ENCODE measurements at regions of chr16 and their contacts with region 1.

Region 1: DNA sequence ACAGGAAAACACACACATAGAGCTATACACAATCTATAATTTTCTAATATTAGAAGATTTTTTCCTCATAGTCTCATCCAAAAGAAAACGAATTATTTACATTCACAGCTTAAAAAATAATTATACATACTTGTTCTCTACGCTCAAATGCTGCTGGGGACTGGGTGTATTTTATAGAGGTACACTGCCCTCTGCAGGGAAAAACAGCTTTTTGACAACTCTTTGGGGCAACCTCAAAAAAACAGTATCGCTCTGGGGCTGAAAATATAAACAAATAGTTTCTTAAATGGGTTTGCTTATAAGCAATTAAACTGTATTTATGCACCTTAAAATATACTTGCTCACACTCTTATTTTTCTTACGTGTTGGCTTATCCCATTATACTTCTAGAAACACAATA is 261.8 kb upstream of the PSMD7 start:
- DNase-seq: peak; percentile 57
- H3K4me3 ChIP-seq: no peak overlapping the region
- H3K27ac ChIP-seq: no peak overlapping the region
- H3K4me1 ChIP-seq: no peaks in the 10 kb centered on the region
- H3K27me3 ChIP-seq: no peaks in the 10 kb centered on the region
- CTCF ChIP-seq: peak; percentile 50
- EP300 ChIP-seq: no peak
- RAD21 ChIP-seq: peak; percentile 79

Region 2: DNA sequence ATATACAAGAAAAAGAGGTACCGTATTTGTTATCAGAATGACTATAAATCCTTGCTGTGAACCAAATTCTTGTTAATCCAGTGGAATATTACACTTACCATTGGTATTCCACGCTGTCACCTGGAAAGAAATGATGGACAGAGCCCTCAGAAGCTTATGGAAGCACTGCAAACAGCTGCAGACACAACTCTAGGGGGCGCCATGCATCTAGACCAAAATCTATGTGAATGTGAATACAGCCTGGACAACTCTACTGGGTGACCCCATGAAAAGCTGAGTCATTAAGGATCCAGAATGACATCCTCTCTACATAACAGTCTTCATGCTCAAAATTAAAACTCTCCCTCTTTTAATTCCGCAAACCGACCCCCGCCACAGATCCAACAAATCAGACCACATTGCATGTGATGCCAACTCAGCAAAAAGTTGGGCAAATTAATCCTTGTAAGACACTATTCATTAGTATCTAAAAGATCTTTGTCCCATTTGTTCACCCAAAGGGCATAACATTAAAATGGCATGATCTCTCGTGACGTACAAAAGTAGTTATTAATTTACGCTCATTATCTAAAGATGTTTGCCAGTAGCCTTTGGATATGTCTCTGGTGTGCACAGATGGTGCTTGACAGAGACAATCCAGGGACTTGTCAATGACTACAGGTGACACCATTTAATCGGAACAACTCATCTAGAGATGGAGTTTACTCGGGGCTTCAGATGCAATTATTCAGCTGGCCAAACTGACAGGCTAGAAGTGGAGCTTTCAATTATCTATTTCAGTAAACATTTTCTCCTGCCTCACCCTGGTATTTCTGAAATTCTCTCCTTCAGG is 291.0 kb before region 1 on chr16:
- CTCF ChIA-PET with region 1: interaction called, 11 read pairs
- POLR2A ChIA-PET with region 1: no interaction called
- DNase-seq: peak; percentile 44
- H3K4me3 ChIP-seq: no peak overlapping the region
- H3K27ac ChIP-seq: no peak overlapping the region
- H3K4me1 ChIP-seq: peaks cover 0 to 9% of the 10 kb centered on the region in 2 experiments; a peak in 2 of 4 replicates
- H3K27me3 ChIP-seq: no peaks in the 10 kb centered on the region
- CTCF ChIP-seq: peak; percentile 17; the same call in 1 of the 2 replicates
- EP300 ChIP-seq: peak in 1 of 2 experiments; percentile 94; a peak in 2 of 4 replicates
- RAD21 ChIP-seq: peak; percentile 75

Region 3: GRCh38 chr16:73956587-73957494 is 78.0 kb before region 1 on chr16:
- CTCF ChIA-PET with region 1: interaction called, 28 read pairs
- POLR2A ChIA-PET with region 1: no interaction called
- DNase-seq: peak; percentile 65
- H3K4me3 ChIP-seq: no peak overlapping the region
- H3K27ac ChIP-seq: no peak overlapping the region
- H3K4me1 ChIP-seq: no peaks in the 10 kb centered on the region; a peak in 2 of 4 replicates
- H3K27me3 ChIP-seq: no peaks in the 10 kb centered on the region
- CTCF ChIP-seq: peak; percentile 95
- EP300 ChIP-seq: no peak
- RAD21 ChIP-seq: peak; percentile 91

Region 4: DNA sequence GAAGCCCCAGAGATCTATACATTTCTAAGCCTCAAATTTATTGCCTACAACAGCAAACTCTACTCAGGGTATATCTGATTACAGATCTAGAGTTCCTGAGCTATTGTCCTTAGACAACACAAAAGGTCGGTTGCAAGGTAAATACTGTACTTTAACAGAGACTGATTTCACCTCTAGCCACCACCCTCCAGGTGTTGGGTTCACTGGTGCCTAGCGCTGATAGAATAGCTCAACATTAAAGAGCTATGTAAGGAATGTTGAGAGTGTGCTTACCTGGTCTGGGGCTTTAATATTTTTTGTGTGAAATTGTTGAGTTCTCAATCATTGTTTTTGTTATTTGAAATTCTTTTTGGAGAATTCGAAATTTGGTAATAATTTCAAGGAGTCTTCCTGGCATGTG is 15.2 kb before region 1 on chr16:
- CTCF ChIA-PET with region 1: interaction called, 38 read pairs
- POLR2A ChIA-PET with region 1: no interaction called
- DNase-seq: no peak
- H3K4me3 ChIP-seq: no peak overlapping the region
- H3K27ac ChIP-seq: no peak overlapping the region
- H3K4me1 ChIP-seq: no peaks in the 10 kb centered on the region
- H3K27me3 ChIP-seq: no peaks in the 10 kb centered on the region
- CTCF ChIP-seq: no peak
- EP300 ChIP-seq: no peak
- RAD21 ChIP-seq: no peak

Region 5: GRCh38 chr16:74053826-74054225 is 19.0 kb after region 1 on chr16:
- CTCF ChIA-PET with region 1: interaction called, 40 read pairs
- POLR2A ChIA-PET with region 1: no interaction called
- DNase-seq: no peak
- H3K4me3 ChIP-seq: no peak overlapping the region
- H3K27ac ChIP-seq: no peak overlapping the region
- H3K4me1 ChIP-seq: no peaks in the 10 kb centered on the region
- H3K27me3 ChIP-seq: no peaks in the 10 kb centered on the region
- CTCF ChIP-seq: no peak
- EP300 ChIP-seq: no peak
- RAD21 ChIP-seq: no peak

Region 6: GRCh38 chr16:74226338-74226954 is 191.6 kb after region 1 on chr16:
- CTCF ChIA-PET with region 1: interaction called, 13 read pairs
- POLR2A ChIA-PET with region 1: no interaction called
- DNase-seq: peak; percentile 37
- H3K4me3 ChIP-seq: no peak overlapping the region
- H3K27ac ChIP-seq: no peak overlapping the region
- H3K4me1 ChIP-seq: no peaks in the 10 kb centered on the region
- H3K27me3 ChIP-seq: no peaks in the 10 kb centered on the region
- CTCF ChIP-seq: peak; percentile 59
- EP300 ChIP-seq: no peak
- RAD21 ChIP-seq: peak; percentile 83

Region 7: DNA sequence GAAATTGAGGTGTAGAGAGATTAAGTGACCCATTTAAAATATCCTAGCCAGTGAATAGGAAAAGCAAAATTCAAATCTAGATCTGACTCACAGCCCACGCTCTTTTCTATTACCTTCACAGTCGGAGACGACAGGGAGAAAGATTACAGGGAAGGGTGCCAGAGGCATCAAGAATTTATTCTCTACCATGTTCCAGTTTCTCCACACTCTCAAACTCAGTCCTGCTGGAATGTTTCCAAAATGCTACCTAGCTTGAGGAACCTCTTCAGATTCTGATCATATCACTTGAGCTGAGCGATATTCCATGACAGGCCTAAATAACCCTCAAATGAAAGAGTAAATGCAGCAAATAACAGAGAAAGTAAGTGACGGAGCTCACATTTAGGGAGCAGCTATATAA is 256.3 kb after region 1 on chr16:
- CTCF ChIA-PET with region 1: no interaction called
- POLR2A ChIA-PET with region 1: no interaction called
- DNase-seq: no peak
- H3K4me3 ChIP-seq: no peak overlapping the region
- H3K27ac ChIP-seq: no peak overlapping the region
- H3K4me1 ChIP-seq: peaks cover 0 to 5% of the 10 kb centered on the region in 2 experiments; a peak in 2 of 4 replicates
- H3K27me3 ChIP-seq: no peaks in the 10 kb centered on the region
- CTCF ChIP-seq: no peak
- EP300 ChIP-seq: no peak
- RAD21 ChIP-seq: no peak

Measured in SK-N-SH (cell line).